CD8-positive, alpha-beta memory T cell (primary cell): ENCODE measurements at regions of chr3 and their contacts with region 1.

Region 1: GRCh38 chr3:49469936-49470713 is at the start of gene DAG1:
- DNase-seq: peak; percentile 94 to 96 (median 95)
- H3K4me3 ChIP-seq: peak within 1 kb of the TSS; percentile 96
- H3K4me3 Mint-ChIP-seq: peak within 1 kb of the TSS; percentile 89 to 95 (median 90)
- H3K27ac ChIP-seq: peak within 1 kb of the TSS; percentile 82
- H3K27ac Mint-ChIP-seq: peak within 1 kb of the TSS; percentile 93 to 98 (median 96)
- H3K4me1 ChIP-seq: peaks cover 25% of the 10 kb centered on the region
- H3K4me1 Mint-ChIP-seq: peaks cover 22 to 26% (median 24%) of the 10 kb centered on the region in 3 donors
- H3K27me3 ChIP-seq: no peaks in the 10 kb centered on the region
- H3K27me3 Mint-ChIP-seq: no peaks in the 10 kb centered on the region
- total RNA-seq, gene DAG1: 20.9 to 21.2 TPM

Region 2: DNA sequence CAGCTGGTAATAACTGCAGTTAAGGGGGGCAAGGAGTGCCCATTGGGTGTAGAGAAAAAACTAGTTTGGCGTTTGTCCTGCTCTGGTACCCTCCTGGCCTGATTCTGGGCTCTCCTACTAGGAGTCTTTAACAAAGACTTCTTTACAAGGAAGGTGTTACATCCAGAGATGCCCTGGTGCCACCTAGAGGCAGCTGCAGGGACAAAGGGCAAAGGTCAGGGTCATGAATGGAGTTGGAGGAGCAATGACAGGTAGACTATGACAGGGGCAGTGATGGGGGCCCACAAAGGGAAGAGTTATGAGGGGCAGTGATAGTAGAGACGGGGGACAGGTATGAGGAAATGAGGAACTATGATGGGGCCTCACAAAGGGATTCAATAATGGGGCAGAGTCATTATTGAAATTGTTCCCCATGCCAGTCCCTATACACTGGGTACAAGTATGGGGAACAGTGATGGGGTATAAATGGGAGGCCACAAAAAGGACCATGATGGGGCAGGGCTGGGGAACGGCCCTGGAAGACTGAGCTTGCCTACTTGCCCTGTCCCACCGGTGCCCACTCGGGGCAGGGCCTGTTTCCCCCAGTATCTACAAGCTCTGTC is 311.9 kb before region 1 on chr3:
- CTCF ChIA-PET with region 1: no interaction called
- POLR2A ChIA-PET with region 1: interaction called, 12 read pairs
- DNase-seq: peak; percentile 36 to 78 (median 49)
- H3K4me3 ChIP-seq: no peak overlapping the region
- H3K4me3 Mint-ChIP-seq: peak overlapping the region in 1 of 7 donors; percentile 2
- H3K27ac ChIP-seq: no peak overlapping the region
- H3K27ac Mint-ChIP-seq: peak overlapping the region in 6 of 8 donors; percentile 2 to 98 (median 40)
- H3K4me1 ChIP-seq: no peaks in the 10 kb centered on the region
- H3K4me1 Mint-ChIP-seq: peaks cover 0 to 12% (median 4%) of the 10 kb centered on the region in 3 donors
- H3K27me3 ChIP-seq: no peaks in the 10 kb centered on the region
- H3K27me3 Mint-ChIP-seq: no peaks in the 10 kb centered on the region

Region 3: GRCh38 chr3:49519296-49519695 is 49.2 kb after region 1 on chr3:
- CTCF ChIA-PET with region 1: no interaction called
- POLR2A ChIA-PET with region 1: no interaction called
- DNase-seq: no peak
- H3K4me3 ChIP-seq: no peak overlapping the region
- H3K4me3 Mint-ChIP-seq: no peak overlapping the region
- H3K27ac ChIP-seq: no peak overlapping the region
- H3K27ac Mint-ChIP-seq: peak overlapping the region in 3 of 8 donors; percentile 27 to 55 (median 46)
- H3K4me1 ChIP-seq: no peaks in the 10 kb centered on the region
- H3K4me1 Mint-ChIP-seq: peaks cover 12 to 29% (median 23%) of the 10 kb centered on the region in 3 donors
- H3K27me3 ChIP-seq: no peaks in the 10 kb centered on the region
- H3K27me3 Mint-ChIP-seq: no peaks in the 10 kb centered on the region